ENCODE measurements at regions of chr2 and their contacts with region 1.

Region 1: DNA sequence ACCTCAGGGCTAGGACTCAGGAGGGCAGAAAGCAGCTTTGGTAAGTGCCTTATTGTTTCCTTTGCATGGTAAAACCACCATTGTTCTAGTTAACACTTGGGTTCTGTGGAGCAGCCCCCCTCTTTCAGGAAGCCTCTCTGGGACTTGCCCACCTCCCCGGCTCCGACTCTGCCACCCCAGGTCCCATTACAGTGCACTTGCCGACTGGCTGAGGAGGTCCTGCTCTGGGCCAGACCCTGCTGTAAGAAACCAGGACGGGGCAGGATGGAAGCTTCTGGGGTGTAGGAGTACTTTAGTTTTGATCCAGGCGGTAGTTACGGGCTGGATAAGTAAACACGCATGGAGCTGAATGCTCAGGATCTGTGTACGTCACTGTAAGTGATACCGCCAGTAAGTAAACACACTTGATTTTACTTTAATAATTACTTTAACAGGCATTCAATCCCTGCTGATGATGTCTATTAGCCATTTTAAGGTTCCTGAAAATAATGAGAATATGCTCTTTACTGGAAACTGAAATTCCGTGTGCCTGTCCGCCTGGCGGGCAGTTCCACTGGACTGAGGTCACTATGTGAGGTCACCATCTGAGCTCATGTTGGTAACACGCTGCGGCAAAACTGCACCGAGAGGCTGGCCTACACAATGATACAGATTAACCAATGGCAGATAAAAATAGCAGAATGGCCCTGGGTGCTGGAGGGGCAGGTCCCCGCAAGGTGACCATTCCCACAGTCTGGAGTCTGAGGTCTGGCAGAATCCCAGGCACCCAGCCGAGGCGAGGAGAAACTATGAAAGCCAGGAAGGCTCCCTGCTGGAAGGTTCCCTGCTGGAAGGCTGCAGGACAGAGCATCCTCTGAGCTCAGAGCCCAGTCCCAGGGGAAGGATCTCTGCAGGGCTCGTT is 25.2 kb downstream of the HS1BP3 start:
- DNase-seq: no peak
- H3K4me3 ChIP-seq: no peak overlapping the region
- H3K27ac ChIP-seq: no peak overlapping the region
- H3K4me1 ChIP-seq: no peaks in the 10 kb centered on the region
- H3K27me3 ChIP-seq: no peaks in the 10 kb centered on the region
- CTCF ChIP-seq: no peak

Region 2: DNA sequence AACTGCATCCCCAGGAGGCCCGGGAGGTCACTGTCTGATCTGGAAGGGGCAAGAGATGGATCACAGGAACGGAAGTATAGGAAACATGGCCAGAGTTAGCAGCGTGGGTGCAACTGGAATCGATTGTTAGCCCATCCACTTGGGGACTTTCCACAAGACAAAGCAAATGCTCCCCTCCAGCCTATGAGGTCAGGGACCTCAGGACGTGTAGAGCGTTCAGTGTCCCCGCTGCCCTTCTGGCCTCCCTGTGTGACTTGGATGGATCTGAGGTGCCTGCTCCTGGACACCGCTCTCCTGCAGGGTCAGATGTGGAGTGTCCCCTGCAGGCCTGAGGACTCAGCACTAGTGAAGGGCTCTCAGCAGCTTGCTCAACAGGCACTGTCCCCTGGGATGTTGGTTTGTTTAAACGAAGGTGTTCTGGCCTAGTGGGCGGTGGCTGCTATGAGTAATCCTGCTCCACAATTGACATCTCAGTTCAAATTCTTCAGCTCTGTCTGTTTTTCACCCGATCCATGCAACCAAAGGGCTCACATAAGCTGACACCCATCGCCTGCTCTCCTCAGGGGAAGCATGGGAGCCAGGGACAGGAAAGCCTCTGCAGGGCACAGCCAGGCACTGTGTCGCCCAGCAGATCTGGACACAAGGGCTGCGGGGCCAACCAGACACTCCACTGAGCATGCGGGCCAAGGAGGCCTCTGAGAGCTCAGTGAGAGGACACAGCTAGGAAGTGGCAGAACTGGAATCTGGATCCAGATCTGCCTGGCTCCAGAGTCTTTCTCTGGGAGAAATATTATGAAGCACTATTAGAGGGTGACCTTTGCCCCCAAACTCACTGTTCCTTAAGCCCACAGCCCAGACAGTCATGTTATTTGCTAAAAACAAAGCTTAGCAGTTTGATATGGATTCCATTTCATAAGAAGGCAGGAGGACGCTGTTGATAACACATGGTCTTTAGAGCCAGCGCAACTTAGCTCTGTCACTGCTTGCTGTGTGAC is 100.4 kb before region 1 on chr2:
- CTCF ChIA-PET with region 1: no interaction called
- dilution Hi-C with region 1: loop called (anchors 5 kb)
- in situ Hi-C with region 1: no loop called
- intact Hi-C with region 1: no loop called
- DNase-seq: peak; percentile 44
- H3K4me3 ChIP-seq: no peak overlapping the region
- H3K27ac ChIP-seq: no peak overlapping the region
- H3K4me1 ChIP-seq: peaks cover 9% of the 10 kb centered on the region
- H3K27me3 ChIP-seq: no peaks in the 10 kb centered on the region
- CTCF ChIP-seq: no peak

Region 3: GRCh38 chr2:20551260-20551944 is 74.3 kb before region 1 on chr2:
- CTCF ChIA-PET with region 1: no interaction called
- dilution Hi-C with region 1: no loop called
- in situ Hi-C with region 1: no loop called
- intact Hi-C with region 1: no loop called
- DNase-seq: no peak
- H3K4me3 ChIP-seq: no peak overlapping the region
- H3K27ac ChIP-seq: no peak overlapping the region
- H3K4me1 ChIP-seq: no peaks in the 10 kb centered on the region
- H3K27me3 ChIP-seq: no peaks in the 10 kb centered on the region
- CTCF ChIP-seq: no peak

Region 4: DNA sequence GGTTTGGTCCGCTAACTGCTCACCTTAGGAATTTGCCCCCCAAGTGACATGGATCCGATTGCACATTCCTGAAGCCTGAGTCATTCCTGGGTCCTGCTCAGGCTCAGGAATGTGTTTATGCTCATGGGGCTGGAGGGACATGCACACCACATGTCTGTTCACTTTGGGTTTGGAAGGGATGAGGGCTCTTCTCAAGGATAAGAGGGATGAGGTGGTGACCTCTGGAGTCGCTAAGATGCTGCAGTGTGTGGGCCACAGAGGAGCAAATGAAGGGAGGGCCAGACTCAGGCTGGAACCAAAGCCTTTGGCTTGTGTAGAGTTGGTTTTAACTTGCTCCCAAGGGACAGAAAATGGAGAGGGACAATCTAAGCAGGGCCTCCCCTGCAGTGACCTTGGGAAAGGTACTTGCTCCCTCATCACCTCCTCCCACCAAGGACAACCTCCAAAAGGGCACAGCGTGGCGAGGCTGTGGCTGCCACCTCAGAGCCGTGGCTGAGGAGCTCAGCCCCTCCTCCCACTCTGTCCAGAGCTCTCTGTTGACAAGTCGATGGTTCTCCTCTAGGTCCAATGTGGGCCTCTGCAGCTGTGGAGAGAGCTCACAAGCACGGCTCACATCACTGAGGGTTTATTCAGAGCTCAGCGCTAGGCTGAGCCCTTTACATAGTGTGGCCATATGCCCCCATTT is 41.0 kb before region 1 on chr2:
- CTCF ChIA-PET with region 1: no interaction called
- dilution Hi-C with region 1: loop called (anchors 5 kb)
- in situ Hi-C with region 1: no loop called
- intact Hi-C with region 1: no loop called
- DNase-seq: peak; percentile 73
- H3K4me3 ChIP-seq: no peak overlapping the region
- H3K27ac ChIP-seq: no peak overlapping the region
- H3K4me1 ChIP-seq: peaks cover 25% of the 10 kb centered on the region
- H3K27me3 ChIP-seq: no peaks in the 10 kb centered on the region
- CTCF ChIP-seq: no peak